Heart right ventricle (tissue), 16 donors: ENCODE measurements at regions of chr2 and their contacts with region 1.

Region 1: DNA sequence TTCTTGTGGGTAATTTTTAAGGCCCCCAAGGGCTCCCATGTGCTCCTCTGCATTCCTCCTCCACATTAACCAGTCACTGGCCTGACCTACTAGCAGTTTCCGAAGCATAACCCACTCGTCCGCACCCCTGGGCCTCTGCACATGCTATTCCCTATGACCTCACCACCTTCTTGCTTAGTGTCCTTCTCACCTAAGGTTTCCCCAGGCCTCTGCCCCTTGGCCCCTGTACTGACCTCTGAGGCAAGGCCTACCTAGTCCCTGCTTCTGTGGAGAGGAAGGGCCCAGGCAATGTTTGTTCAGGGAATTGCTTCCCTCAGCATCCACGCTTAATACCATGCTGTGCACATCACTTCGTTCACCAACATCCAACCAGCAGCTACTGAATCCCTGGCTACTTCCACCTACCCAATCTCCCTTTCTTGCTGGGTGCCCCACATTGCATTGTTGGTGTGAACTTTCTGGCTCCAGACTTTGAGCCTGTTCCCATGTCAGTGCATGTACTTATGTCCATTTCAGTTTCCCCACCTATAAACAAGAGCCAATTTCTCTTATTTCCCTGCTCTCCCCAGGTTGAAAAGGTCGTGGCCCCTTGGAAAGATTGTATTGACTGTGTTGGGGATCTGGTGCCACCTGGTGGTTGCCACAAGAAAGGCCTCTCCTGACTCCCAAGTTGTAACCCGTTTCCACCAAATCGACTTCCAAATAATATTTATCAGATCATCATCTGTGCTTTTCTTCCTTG is 19.2 kb upstream of the TMEM177 start:
- DNase-seq: no peak
- ATAC-seq: peak in 2 of 8 donors; percentile 53 to 56
- H3K4me3 ChIP-seq: no peak overlapping the region
- H3K27ac ChIP-seq: no peak overlapping the region
- H3K4me1 ChIP-seq: peaks cover 0 to 5% (median 0%) of the 10 kb centered on the region in 9 donors
- H3K27me3 ChIP-seq: peaks cover 0 to 5% (median 0%) of the 10 kb centered on the region in 7 donors
- CTCF ChIP-seq: peak; percentile 73 to 92 (median 89)

Region 2: GRCh38 chr2:119407430-119408220 is 252.1 kb before region 1 on chr2:
- intact Hi-C with region 1: loop called in 9 of 10 experiments (anchors 2 to 10 kb)
- DNase-seq: peak in 1 of 2 donors; percentile 61
- ATAC-seq: peak; percentile 45 to 85 (median 74)
- H3K4me3 ChIP-seq: no peak overlapping the region
- H3K27ac ChIP-seq: peak overlapping the region in 1 of 10 donors; percentile 16
- H3K4me1 ChIP-seq: peaks cover 0 to 13% (median 4%) of the 10 kb centered on the region in 9 donors
- H3K27me3 ChIP-seq: no peaks in the 10 kb centered on the region
- CTCF ChIP-seq: peak; percentile 67 to 85 (median 79)

Region 3: GRCh38 chr2:119517433-119517832 is 142.3 kb before region 1 on chr2:
- intact Hi-C with region 1: loop called in 9 of 10 experiments (anchors 2 to 10 kb)
- DNase-seq: peak; percentile 36 to 53
- ATAC-seq: peak; percentile 29 to 77 (median 66)
- H3K4me3 ChIP-seq: no peak overlapping the region
- H3K27ac ChIP-seq: no peak overlapping the region
- H3K4me1 ChIP-seq: peaks cover 0 to 5% (median 0%) of the 10 kb centered on the region in 9 donors
- H3K27me3 ChIP-seq: peaks cover 0 to 19% (median 12%) of the 10 kb centered on the region in 7 donors
- CTCF ChIP-seq: peak; percentile 26 to 73 (median 60)

Region 4: GRCh38 chr2:119523952-119524694 is 135.6 kb before region 1 on chr2 and contains the start of gene SCTR:
- intact Hi-C with region 1: loop called in 8 of 10 experiments (anchors 5 to 10 kb)
- DNase-seq: no peak
- ATAC-seq: peak in 5 of 8 donors; percentile 30 to 60 (median 50)
- H3K4me3 ChIP-seq: peak within 1 kb of the TSS in 7 of 10 donors; percentile 7 to 25 (median 16)
- H3K27ac ChIP-seq: no peak within 1 kb of the TSS
- H3K4me1 ChIP-seq: peaks cover 0 to 9% (median 0%) of the 10 kb centered on the region in 9 donors
- H3K27me3 ChIP-seq: peaks cover 8 to 59% (median 47%) of the 10 kb centered on the region in 7 donors
- CTCF ChIP-seq: no peak
- total RNA-seq, gene SCTR: 0.36 to 0.94 (median 0.57) TPM in 8 of 10 donors, not detected in the others

Region 5: GRCh38 chr2:119641562-119642258 is 18.1 kb before region 1 on chr2:
- intact Hi-C with region 1: loop called in 2 of 10 experiments (anchors 2 kb)
- DNase-seq: peak; percentile 63 to 66
- ATAC-seq: peak; percentile 75 to 91 (median 84)
- H3K4me3 ChIP-seq: no peak overlapping the region
- H3K27ac ChIP-seq: no peak overlapping the region
- H3K4me1 ChIP-seq: peaks cover 0 to 22% (median 6%) of the 10 kb centered on the region in 9 donors
- H3K27me3 ChIP-seq: peaks cover 0 to 8% (median 0%) of the 10 kb centered on the region in 7 donors
- CTCF ChIP-seq: peak; percentile 69 to 97 (median 94)